ENCODE measurements at regions of chr13 and their contacts with region 1.

Region 1: DNA sequence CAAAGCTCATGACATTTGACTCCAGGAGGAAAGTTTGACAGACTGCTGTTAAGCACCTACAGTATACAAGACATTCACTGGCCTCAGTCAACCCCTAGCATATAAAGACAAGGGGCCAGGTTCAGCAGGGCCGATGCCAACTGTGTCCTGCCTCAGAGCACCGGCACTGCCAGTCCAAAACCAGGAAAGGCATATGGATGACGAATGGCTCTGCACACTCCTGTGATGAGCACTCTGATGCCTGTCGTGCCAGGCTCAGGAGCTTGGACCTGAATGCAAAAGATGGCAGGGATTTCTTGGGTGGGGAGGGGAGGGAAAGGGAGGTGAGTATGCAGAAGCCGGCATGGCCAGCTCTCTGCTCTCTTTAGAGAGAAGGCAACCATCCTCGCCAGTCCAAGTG is 38.9 kb downstream of the COL4A1 start:
- DNase-seq: no peak
- CTCF ChIP-seq: no peak

Region 2: GRCh38 chr13:111551204-111551820 is 1283.3 kb after region 1 on chr13:
- CTCF ChIA-PET with region 1: no interaction called
- POLR2A ChIA-PET with region 1: interaction called, 10 read pairs
- DNase-seq: no peak
- CTCF ChIP-seq: no peak